ENCODE measurements at regions of chr2 and their contacts with region 1.

Region 1: GRCh38 chr2:9142551-9143263 is 63.9 kb upstream of the ASAP2 start:
- DNase-seq: peak; percentile 82
- ATAC-seq: peak; percentile 90
- H3K4me3 Mint-ChIP-seq: no peak overlapping the region
- H3K27ac Mint-ChIP-seq: no peak overlapping the region
- H3K4me1 Mint-ChIP-seq: peaks cover 8% of the 10 kb centered on the region
- H3K27me3 Mint-ChIP-seq: peaks cover 19% of the 10 kb centered on the region

Region 2: DNA sequence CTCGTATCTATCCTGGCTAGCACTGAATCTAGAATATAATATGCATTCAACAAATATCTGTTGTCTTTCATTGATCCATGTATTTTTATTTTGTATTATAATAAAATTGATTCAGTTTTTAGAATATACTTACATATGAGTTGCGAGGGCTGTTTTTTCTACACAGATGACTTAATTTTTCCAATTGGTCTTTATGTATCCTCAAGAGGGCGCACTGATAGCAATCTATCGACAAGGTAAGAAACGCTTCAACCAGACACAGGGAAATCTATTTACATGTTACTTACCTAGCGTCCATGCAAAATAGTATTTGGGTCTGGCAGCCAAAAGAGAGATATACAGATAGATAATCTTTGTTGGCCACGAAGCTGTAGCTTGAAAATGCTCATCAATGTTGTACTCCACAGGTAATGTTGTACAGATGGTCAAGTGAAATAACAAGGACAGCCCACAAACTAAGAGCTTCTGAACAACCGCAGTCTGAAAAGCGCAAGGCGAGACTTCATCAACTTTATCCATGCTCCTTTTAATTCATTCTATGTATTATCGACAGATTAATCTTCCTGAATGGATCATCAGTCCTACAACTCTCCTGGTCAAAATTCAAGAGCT is 269.8 kb before region 1 on chr2:
- CTCF ChIA-PET with region 1: interaction called, 11 read pairs
- DNase-seq: no peak
- ATAC-seq: no peak
- H3K4me3 Mint-ChIP-seq: no peak overlapping the region
- H3K27ac Mint-ChIP-seq: no peak overlapping the region
- H3K4me1 Mint-ChIP-seq: no peaks in the 10 kb centered on the region
- H3K27me3 Mint-ChIP-seq: peaks cover 3% of the 10 kb centered on the region

Region 3: GRCh38 chr2:9156483-9156882 is 13.8 kb after region 1 on chr2:
- CTCF ChIA-PET with region 1: no interaction called
- DNase-seq: no peak
- ATAC-seq: no peak
- H3K4me3 Mint-ChIP-seq: no peak overlapping the region
- H3K27ac Mint-ChIP-seq: no peak overlapping the region
- H3K4me1 Mint-ChIP-seq: no peaks in the 10 kb centered on the region
- H3K27me3 Mint-ChIP-seq: peaks cover 14% of the 10 kb centered on the region

Region 4: DNA sequence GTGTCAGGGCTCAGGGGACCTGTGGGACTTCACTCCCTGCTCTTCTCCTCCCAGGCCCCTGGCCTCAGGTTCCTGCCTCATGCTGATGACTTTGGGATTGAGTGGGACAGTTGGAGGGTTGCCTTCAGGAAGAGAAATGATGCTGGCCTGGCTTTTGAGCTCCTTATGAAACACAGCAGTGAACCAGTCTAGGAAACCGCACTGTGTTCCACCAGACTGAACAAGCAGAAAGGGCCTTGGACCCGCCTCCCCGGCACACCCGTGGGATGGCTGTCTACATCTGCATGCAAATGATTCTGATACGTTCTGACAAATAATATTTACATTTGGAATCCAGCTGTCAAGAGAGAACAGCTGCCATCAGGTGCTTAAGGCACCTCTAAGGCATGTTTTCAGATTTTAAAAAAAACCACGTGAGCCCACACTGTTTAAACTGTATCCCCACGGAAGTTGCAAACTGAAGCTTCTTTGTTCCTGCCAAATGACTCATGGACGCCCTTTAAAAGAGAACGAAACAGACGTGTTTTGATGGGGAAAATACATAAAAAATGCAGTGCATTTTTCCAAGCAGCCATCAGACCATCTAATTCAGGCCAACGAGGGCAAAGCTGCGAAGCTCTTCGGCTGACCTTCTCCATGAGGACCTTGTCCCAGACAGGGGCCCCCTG is 36.3 kb after region 1 on chr2:
- CTCF ChIA-PET with region 1: no interaction called
- DNase-seq: no peak
- ATAC-seq: no peak
- H3K4me3 Mint-ChIP-seq: no peak overlapping the region
- H3K27ac Mint-ChIP-seq: no peak overlapping the region
- H3K4me1 Mint-ChIP-seq: no peaks in the 10 kb centered on the region
- H3K27me3 Mint-ChIP-seq: peaks cover 10% of the 10 kb centered on the region

Region 5: GRCh38 chr2:9373077-9373875 is 230.6 kb after region 1 on chr2:
- CTCF ChIA-PET with region 1: interaction called, 13 read pairs
- DNase-seq: no peak
- ATAC-seq: no peak
- H3K4me3 Mint-ChIP-seq: no peak overlapping the region
- H3K27ac Mint-ChIP-seq: no peak overlapping the region
- H3K4me1 Mint-ChIP-seq: no peaks in the 10 kb centered on the region
- H3K27me3 Mint-ChIP-seq: peaks cover 18% of the 10 kb centered on the region

Measured in activated CD8-positive, alpha-beta memory T cell treated with anti-CD3 and anti-CD28 coated beads, Interleukin-2, amount 10 ng/mL, durations not matched to agents 7 days and 5 days (primary cell).